PC-3 (cell line): ENCODE measurements at regions of chr12 and their contacts with region 1.

Region 1: GRCh38 chr12:79006306-79006705 is 141.7 kb downstream of the SYT1 start:
- DNase-seq: peak; percentile 52
- ATAC-seq: peak; percentile 46
- H3K4me3 ChIP-seq: no peak overlapping the region
- H3K27ac ChIP-seq: no peak overlapping the region
- H3K4me1 ChIP-seq: no peaks in the 10 kb centered on the region
- H3K27me3 ChIP-seq: no peaks in the 10 kb centered on the region
- CTCF ChIP-seq: peak; percentile 69

Region 2: GRCh38 chr12:78392918-78393317 is 613.4 kb before region 1 on chr12:
- CTCF ChIA-PET with region 1: no interaction called
- POLR2A ChIA-PET with region 1: no interaction called
- intact Hi-C with region 1: loop called (anchors 5 kb)
- DNase-seq: peak; percentile 56
- ATAC-seq: peak; percentile 62; the same call in 1 of the 2 replicates
- H3K4me3 ChIP-seq: no peak overlapping the region
- H3K27ac ChIP-seq: no peak overlapping the region
- H3K4me1 ChIP-seq: 0 out of 2 replicates have a peak, but pooled peaks cover under 1% of the 10 kb centered on the region
- H3K27me3 ChIP-seq: no peaks in the 10 kb centered on the region
- CTCF ChIP-seq: peak; percentile 63

Region 3: GRCh38 chr12:78470354-78471195 is 535.7 kb before region 1 on chr12:
- CTCF ChIA-PET with region 1: interaction called, 3 read pairs
- POLR2A ChIA-PET with region 1: no interaction called
- intact Hi-C with region 1: loop called (anchors 1 kb)
- DNase-seq: peak; percentile 64
- ATAC-seq: peak; percentile 80
- H3K4me3 ChIP-seq: no peak overlapping the region
- H3K27ac ChIP-seq: no peak overlapping the region
- H3K4me1 ChIP-seq: no peaks in the 10 kb centered on the region
- H3K27me3 ChIP-seq: no peaks in the 10 kb centered on the region
- CTCF ChIP-seq: peak; percentile 81

Region 4: DNA sequence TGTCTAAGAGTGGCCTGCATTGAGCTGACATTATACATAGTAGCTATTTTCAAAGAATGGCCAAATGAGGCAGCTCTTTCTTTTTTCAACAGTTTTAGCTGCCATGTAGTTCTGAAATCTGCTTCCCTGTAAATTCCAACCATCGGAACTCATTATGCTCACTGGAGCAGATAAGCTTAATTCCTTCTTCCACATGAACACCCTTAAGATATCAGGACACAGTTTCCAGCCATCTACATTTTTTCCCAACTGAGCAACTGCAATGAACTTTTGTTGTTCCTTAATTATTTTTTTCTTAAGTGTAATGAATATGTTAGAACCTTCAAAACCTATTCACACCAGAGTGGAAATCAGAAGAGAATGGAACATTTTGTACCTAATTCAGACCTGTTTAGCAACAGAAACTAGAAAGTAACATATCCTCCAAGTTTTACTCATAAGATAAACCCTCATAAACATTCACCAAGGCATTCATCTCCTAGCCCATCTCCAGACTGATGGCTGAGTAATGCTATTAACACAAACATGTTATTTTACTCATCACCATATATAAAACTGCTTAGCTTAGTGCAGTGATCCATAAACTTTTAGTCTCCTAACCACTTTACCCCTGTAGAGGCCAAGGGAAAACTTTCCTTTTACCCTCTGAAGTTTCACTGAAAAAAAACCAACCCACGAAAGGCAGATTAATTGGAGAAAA is 437.8 kb before region 1 on chr12:
- CTCF ChIA-PET with region 1: no interaction called
- POLR2A ChIA-PET with region 1: no interaction called
- intact Hi-C with region 1: loop called (anchors 5 kb)
- DNase-seq: peak; percentile 71
- ATAC-seq: peak; percentile 98
- H3K4me3 ChIP-seq: no peak overlapping the region
- H3K27ac ChIP-seq: peak overlapping the region; percentile 63
- H3K4me1 ChIP-seq: peaks cover 15% of the 10 kb centered on the region
- H3K27me3 ChIP-seq: no peaks in the 10 kb centered on the region
- CTCF ChIP-seq: no peak

Region 5: GRCh38 chr12:78641837-78642423 is 364.4 kb before region 1 on chr12:
- CTCF ChIA-PET with region 1: no interaction called
- POLR2A ChIA-PET with region 1: no interaction called
- intact Hi-C with region 1: loop called (anchors 5 kb)
- DNase-seq: peak; percentile 40
- ATAC-seq: peak; percentile 83
- H3K4me3 ChIP-seq: no peak overlapping the region
- H3K27ac ChIP-seq: no peak overlapping the region
- H3K4me1 ChIP-seq: no peaks in the 10 kb centered on the region
- H3K27me3 ChIP-seq: no peaks in the 10 kb centered on the region
- CTCF ChIP-seq: peak; percentile 48; the same call in 1 of the 2 replicates

Region 6: GRCh38 chr12:79121487-79121886 is 115.2 kb after region 1 on chr12:
- CTCF ChIA-PET with region 1: no interaction called
- POLR2A ChIA-PET with region 1: no interaction called
- intact Hi-C with region 1: no loop called
- DNase-seq: peak; percentile 18
- ATAC-seq: no peak
- H3K4me3 ChIP-seq: no peak overlapping the region
- H3K27ac ChIP-seq: no peak overlapping the region
- H3K4me1 ChIP-seq: no peaks in the 10 kb centered on the region
- H3K27me3 ChIP-seq: no peaks in the 10 kb centered on the region
- CTCF ChIP-seq: peak; percentile 59

Region 7: GRCh38 chr12:79344855-79345847 is 338.8 kb after region 1 on chr12:
- CTCF ChIA-PET with region 1: no interaction called
- POLR2A ChIA-PET with region 1: no interaction called
- intact Hi-C with region 1: loop called (anchors 10 kb)
- DNase-seq: peak; percentile 77
- ATAC-seq: peak; percentile 99
- H3K4me3 ChIP-seq: no peak overlapping the region
- H3K27ac ChIP-seq: no peak overlapping the region
- H3K4me1 ChIP-seq: no peaks in the 10 kb centered on the region
- H3K27me3 ChIP-seq: peaks cover 4% of the 10 kb centered on the region; the same call in 1 of the 2 replicates
- CTCF ChIP-seq: peak; percentile 91